Caco-2 (cell line): ENCODE measurements at regions of chr2 and their contacts with region 1.

Region 1: DNA sequence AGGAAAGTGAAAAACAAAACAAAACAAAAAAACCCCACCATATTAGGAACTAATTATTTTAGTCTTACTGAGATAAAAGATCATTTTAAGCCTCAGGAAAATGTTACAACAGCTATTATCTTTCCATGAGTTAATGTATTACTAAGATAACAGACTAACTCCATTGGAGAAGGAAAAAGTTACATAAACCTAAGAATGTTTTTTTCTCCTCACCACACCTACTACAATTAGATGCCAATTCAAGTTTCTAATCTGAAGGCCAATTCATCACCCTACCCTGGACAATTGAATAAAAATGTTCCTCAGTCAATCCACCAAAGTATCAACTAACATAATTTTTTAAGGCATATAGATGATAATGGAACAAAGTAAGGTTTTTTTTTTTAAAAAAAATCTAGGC is 10.2 kb upstream of the GFPT1 start:
- DNase-seq: no peak
- H3K4me3 ChIP-seq: no peak overlapping the region
- H3K4me3 Mint-ChIP-seq: no peak overlapping the region
- H3K27ac Mint-ChIP-seq: no peak overlapping the region
- H3K4me1 ChIP-seq: peaks cover 11% of the 10 kb centered on the region
- H3K4me1 Mint-ChIP-seq: no peaks in the 10 kb centered on the region
- H3K27me3 ChIP-seq: no peaks in the 10 kb centered on the region
- H3K27me3 Mint-ChIP-seq: no peaks in the 10 kb centered on the region
- CTCF ChIP-seq: no peak

Region 2: DNA sequence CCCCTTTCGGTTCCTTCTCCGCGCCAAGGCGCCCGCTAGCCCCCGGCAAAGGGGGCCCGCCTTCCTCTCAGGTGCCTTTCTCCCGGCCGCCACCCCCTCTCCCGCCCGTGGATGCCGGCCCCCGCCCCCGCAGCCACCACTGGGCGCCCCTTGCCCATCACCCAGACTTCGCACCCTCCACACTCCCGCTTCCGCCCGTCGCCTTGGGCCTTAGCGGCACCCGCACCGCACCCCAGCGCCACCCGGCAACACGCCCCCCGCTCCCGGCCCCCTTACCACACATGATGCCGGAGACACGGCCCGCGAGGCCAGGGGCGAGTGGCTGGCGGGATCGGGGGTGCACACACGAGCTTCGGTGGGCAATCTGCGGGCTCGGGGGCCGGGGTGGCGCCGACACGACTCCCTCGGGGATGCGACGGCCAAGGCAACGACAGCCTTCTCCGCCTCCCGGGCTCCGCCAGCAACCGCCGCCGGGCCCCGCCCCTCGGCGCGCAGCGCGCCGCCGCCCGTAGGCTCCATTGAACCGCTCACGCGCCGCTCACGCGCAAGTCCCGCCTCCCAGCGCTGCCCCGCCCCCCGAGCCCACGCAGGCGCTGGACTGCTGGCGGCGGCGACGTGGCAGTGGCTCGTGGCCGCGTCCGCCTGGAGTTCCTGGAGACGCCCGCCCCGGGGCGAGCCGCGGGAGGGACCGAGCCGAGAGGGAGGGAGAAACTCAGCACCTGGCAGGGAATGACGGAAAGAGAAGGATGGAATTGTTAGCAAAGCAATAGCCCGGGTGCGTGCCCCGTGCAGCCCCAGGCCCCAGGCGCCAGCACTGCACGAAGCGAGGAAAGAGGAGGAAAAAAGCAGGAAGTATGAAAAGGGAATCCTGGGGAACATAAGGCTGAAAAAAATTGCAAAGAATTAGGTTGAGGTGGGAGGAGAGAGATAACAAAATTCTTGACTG is 10.2 kb before region 1 on chr2 and contains the start of gene GFPT1:
- CTCF ChIA-PET with region 1: interaction called, 3 read pairs
- POLR2A ChIA-PET with region 1: interaction called, 4 read pairs
- intact Hi-C with region 1: loop called (anchors 1 kb)
- DNase-seq: peak; percentile 95 to 98
- H3K4me3 ChIP-seq: peak within 1 kb of the TSS; percentile 98
- H3K4me3 Mint-ChIP-seq: peak within 1 kb of the TSS; percentile 96
- H3K27ac Mint-ChIP-seq: peak within 1 kb of the TSS; percentile 96
- H3K4me1 ChIP-seq: peaks cover 25% of the 10 kb centered on the region
- H3K4me1 Mint-ChIP-seq: peaks cover 18% of the 10 kb centered on the region
- H3K27me3 ChIP-seq: no peaks in the 10 kb centered on the region
- H3K27me3 Mint-ChIP-seq: no peaks in the 10 kb centered on the region
- CTCF ChIP-seq: no peak
- total RNA-seq, gene GFPT1: 122 and 129 TPM in 2 replicates